ENCODE measurements at regions of chr5 and their contacts with region 1.

Region 1: GRCh38 chr5:131382407-131383395 is 118.8 kb downstream of the CDC42SE2 start:
- DNase-seq: peak; percentile 19 to 60
- H3K4me3 ChIP-seq: no peak overlapping the region
- H3K27ac ChIP-seq: no peak overlapping the region
- H3K4me1 ChIP-seq: peaks cover 8% of the 10 kb centered on the region; the same call in 1 of the 2 replicates
- H3K27me3 ChIP-seq: no peaks in the 10 kb centered on the region
- CTCF ChIP-seq: peak; percentile 69

Region 2: GRCh38 chr5:131148835-131149234 is 233.9 kb before region 1 on chr5:
- CTCF ChIA-PET with region 1: no interaction called
- POLR2A ChIA-PET with region 1: no interaction called
- intact Hi-C with region 1: no loop called
- DNase-seq: no peak
- H3K4me3 ChIP-seq: no peak overlapping the region
- H3K27ac ChIP-seq: no peak overlapping the region
- H3K4me1 ChIP-seq: no peaks in the 10 kb centered on the region
- H3K27me3 ChIP-seq: no peaks in the 10 kb centered on the region
- CTCF ChIP-seq: no peak

Region 3: GRCh38 chr5:131263648-131264450 is 118.9 kb before region 1 on chr5 and contains the start of gene CDC42SE2:
- CTCF ChIA-PET with region 1: no interaction called
- POLR2A ChIA-PET with region 1: interaction called, 3 read pairs
- intact Hi-C with region 1: loop called (anchors 2 kb)
- DNase-seq: peak; percentile 59 to 86
- H3K4me3 ChIP-seq: peak within 1 kb of the TSS; percentile 86
- H3K27ac ChIP-seq: peak within 1 kb of the TSS; percentile 61
- H3K4me1 ChIP-seq: peaks cover 31% of the 10 kb centered on the region
- H3K27me3 ChIP-seq: no peaks in the 10 kb centered on the region
- CTCF ChIP-seq: no peak
- total RNA-seq, gene CDC42SE2: 27.3 and 32.8 TPM in 2 replicates

Region 4: DNA sequence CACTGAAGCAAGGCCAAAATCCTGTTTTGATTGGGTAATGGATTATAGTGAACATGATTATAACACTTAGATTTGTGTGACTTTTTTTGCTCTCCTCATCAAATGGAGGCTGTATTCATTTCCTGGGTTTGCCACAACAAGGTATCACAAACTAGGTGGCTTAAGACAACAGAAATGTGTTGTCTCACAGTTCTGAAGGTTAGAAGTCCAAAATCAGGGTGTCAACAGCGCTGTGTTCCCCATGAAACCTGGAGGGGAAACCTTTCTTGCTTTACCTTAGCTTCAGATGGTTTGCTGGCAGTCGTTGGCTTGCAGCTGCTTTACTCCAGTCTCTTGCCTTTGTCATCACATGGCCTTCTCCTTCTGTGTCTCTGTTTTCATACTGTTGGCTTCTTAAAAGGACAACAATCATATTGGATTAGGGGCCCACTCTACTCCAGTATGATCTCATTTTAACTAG is 86.5 kb before region 1 on chr5:
- CTCF ChIA-PET with region 1: no interaction called
- POLR2A ChIA-PET with region 1: interaction called, 10 read pairs
- intact Hi-C with region 1: no loop called
- DNase-seq: no peak
- H3K4me3 ChIP-seq: no peak overlapping the region
- H3K27ac ChIP-seq: no peak overlapping the region
- H3K4me1 ChIP-seq: no peaks in the 10 kb centered on the region
- H3K27me3 ChIP-seq: no peaks in the 10 kb centered on the region
- CTCF ChIP-seq: no peak

Region 5: DNA sequence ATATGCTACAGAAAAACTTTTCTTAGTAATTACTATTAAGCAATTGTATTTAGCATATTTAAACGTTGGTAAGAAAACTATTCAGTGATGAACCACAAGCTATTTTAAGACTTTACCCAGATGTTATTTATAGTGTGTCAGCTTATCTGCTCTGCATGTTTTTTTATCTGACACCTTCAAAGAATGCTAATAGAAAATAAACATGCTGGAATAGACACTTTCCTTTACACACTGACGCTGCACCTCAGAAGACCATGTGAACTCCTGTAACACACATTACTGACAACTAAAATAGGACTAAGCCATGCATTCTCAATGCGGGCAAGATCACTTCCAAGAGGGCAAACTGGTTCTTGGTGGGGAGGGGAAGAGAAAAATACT is 375.8 kb after region 1 on chr5:
- CTCF ChIA-PET with region 1: no interaction called
- POLR2A ChIA-PET with region 1: no interaction called
- intact Hi-C with region 1: no loop called
- DNase-seq: no peak
- H3K4me3 ChIP-seq: no peak overlapping the region
- H3K27ac ChIP-seq: no peak overlapping the region
- H3K4me1 ChIP-seq: no peaks in the 10 kb centered on the region
- H3K27me3 ChIP-seq: no peaks in the 10 kb centered on the region
- CTCF ChIP-seq: no peak